Activated naive CD4-positive, alpha-beta T cell treated with anti-CD3 and anti-CD28 coated beads for 36 hours (primary cell): ENCODE measurements at regions of chr18 and their contacts with region 1.

Region 1: GRCh38 chr18:31942999-31943865 is at the start of gene TRAPPC8:
- DNase-seq: peak; percentile 96
- H3K4me3 Mint-ChIP-seq: peak within 1 kb of the TSS; percentile 100
- H3K27ac Mint-ChIP-seq: peak within 1 kb of the TSS; percentile 97
- H3K4me1 Mint-ChIP-seq: peaks cover 32% of the 10 kb centered on the region
- H3K27me3 Mint-ChIP-seq: no peaks in the 10 kb centered on the region
- total RNA-seq, gene TRAPPC8: 24.9 to 26.5 TPM

Region 2: GRCh38 chr18:31658670-31659575 is 284.3 kb before region 1 on chr18:
- CTCF ChIA-PET with region 1: no interaction called
- intact Hi-C with region 1: loop called (anchors 1 kb)
- DNase-seq: peak; percentile 38
- H3K4me3 Mint-ChIP-seq: no peak overlapping the region
- H3K27ac Mint-ChIP-seq: peak overlapping the region; percentile 34
- H3K4me1 Mint-ChIP-seq: peaks cover 22% of the 10 kb centered on the region
- H3K27me3 Mint-ChIP-seq: peaks cover under 1% of the 10 kb centered on the region

Region 3: DNA sequence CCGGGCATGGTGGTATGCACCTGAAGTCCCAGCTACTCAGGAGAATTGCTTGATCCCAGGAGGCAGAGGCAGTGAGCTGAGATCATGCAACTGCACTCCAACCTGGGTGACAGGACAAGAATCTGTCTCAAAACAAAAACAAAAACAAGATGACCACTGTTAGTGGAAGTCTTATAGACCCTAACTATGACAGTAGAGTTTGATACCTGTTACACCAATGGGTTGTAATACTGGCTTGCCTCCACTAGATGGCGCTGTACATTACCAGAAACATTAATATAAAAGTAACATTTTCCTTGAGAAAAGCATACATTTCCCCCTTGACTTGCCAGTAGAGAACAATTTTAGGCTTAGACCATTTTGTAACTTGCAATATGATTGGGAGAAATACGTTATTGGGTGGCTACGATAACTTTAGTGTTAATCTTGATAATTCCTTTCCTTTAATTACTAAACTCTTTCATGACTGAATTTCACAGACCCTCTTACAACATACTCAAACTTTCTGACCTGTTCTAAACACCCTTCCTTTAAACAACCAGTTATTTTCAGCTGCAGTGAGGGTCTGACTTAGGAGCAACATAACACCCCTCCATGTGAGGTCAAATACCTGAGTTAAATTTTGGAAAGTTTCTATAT is 202.0 kb before region 1 on chr18:
- CTCF ChIA-PET with region 1: no interaction called
- intact Hi-C with region 1: no loop called
- DNase-seq: peak; percentile 78
- H3K4me3 Mint-ChIP-seq: no peak overlapping the region
- H3K27ac Mint-ChIP-seq: no peak overlapping the region
- H3K4me1 Mint-ChIP-seq: no peaks in the 10 kb centered on the region
- H3K27me3 Mint-ChIP-seq: no peaks in the 10 kb centered on the region

Region 4: GRCh38 chr18:31920277-31920676 is 23.0 kb before region 1 on chr18:
- CTCF ChIA-PET with region 1: no interaction called
- intact Hi-C with region 1: loop called (anchors 1 kb)
- DNase-seq: no peak
- H3K4me3 Mint-ChIP-seq: no peak overlapping the region
- H3K27ac Mint-ChIP-seq: no peak overlapping the region
- H3K4me1 Mint-ChIP-seq: peaks cover 1% of the 10 kb centered on the region
- H3K27me3 Mint-ChIP-seq: no peaks in the 10 kb centered on the region

Region 5: DNA sequence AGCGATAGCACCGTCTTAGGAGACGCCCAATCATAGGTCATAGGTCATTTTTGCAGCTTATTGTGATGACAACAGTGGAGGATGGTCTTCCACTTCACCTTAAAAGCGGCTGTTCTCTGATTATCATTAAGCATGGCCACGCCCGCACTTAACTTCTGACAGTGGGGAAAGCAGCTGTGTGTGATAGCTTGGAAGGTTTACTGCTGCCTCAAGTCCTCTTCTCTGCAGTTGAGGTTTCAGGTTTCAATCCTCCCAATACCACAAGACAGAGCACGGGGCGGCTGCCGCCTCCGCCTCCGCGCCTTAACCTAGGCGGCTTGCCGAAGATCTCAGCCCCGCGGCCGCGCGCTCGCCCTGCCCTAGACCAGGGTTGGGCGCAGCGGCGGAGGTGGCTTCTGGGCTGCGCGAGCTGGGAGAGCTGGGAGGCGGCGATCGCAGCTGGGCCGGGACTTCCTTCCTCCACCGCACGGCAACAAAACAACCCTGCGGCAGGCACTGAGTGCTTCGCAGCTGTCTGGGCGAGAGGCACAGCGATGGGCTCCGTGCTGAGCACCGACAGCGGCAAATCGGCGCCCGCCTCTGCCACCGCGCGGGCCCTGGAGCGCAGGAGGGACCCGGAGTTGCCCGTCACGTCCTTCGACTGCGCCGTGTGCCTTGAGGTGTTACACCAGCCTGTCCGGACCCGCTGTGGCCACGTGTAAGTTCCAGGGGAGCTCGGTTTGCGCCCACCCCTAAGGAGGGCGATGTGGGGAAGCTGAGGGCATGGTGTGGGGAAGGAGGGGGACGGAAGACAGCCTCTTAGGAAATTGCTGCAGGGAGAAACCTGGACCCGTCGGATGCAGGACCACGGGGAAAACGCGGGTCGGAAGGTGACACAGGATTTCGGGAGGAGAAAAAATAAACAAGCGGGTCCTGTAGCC is 75.4 kb after region 1 on chr18 and contains the start of gene RNF125:
- CTCF ChIA-PET with region 1: interaction called, 11 read pairs
- intact Hi-C with region 1: loop called (anchors 1 kb)
- DNase-seq: peak; percentile 81
- H3K4me3 Mint-ChIP-seq: peak within 1 kb of the TSS; percentile 99
- H3K27ac Mint-ChIP-seq: peak within 1 kb of the TSS; percentile 93
- H3K4me1 Mint-ChIP-seq: peaks cover 38% of the 10 kb centered on the region
- H3K27me3 Mint-ChIP-seq: no peaks in the 10 kb centered on the region
- total RNA-seq, gene RNF125: 11.4 to 12.0 TPM

Region 6: DNA sequence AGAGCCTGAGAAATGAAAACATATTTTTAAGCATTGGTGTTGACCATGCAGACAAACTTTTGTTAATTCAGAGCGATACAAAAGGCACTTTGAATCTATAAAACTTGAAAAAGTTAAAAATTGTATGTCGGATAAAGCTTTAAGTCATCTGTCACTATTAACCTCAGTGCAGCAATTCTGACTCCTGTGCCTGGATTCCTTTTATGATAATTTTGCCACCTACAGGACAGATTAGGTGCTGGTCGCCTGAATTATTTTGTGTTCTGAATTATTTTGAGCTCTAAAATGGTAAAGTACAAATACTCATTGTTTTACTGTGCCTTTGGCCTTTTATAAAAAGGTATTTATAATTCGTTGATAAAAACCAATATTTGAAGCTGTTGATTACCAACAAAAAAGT is 129.1 kb after region 1 on chr18:
- CTCF ChIA-PET with region 1: interaction called, 6 read pairs
- intact Hi-C with region 1: loop called (anchors 1 kb)
- DNase-seq: no peak
- H3K4me3 Mint-ChIP-seq: no peak overlapping the region
- H3K27ac Mint-ChIP-seq: no peak overlapping the region
- H3K4me1 Mint-ChIP-seq: peaks cover 8% of the 10 kb centered on the region
- H3K27me3 Mint-ChIP-seq: no peaks in the 10 kb centered on the region

Region 7: GRCh38 chr18:32158108-32158624 is 214.9 kb after region 1 on chr18:
- CTCF ChIA-PET with region 1: interaction called, 3 read pairs
- intact Hi-C with region 1: loop called (anchors 5 kb)
- DNase-seq: peak; percentile 80
- H3K4me3 Mint-ChIP-seq: peak overlapping the region; percentile 49
- H3K27ac Mint-ChIP-seq: no peak overlapping the region
- H3K4me1 Mint-ChIP-seq: peaks cover 5% of the 10 kb centered on the region
- H3K27me3 Mint-ChIP-seq: no peaks in the 10 kb centered on the region

Region 8: GRCh38 chr18:32530947-32531651 is 587.9 kb after region 1 on chr18:
- CTCF ChIA-PET with region 1: no interaction called
- intact Hi-C with region 1: loop called (anchors 1 kb)
- DNase-seq: peak; percentile 40
- H3K4me3 Mint-ChIP-seq: no peak overlapping the region
- H3K27ac Mint-ChIP-seq: peak overlapping the region; percentile 9
- H3K4me1 Mint-ChIP-seq: peaks cover 17% of the 10 kb centered on the region
- H3K27me3 Mint-ChIP-seq: peaks cover 13% of the 10 kb centered on the region